KBM-7 (cell line): ENCODE measurements at regions of chr10 and their contacts with region 1.

Region 1: DNA sequence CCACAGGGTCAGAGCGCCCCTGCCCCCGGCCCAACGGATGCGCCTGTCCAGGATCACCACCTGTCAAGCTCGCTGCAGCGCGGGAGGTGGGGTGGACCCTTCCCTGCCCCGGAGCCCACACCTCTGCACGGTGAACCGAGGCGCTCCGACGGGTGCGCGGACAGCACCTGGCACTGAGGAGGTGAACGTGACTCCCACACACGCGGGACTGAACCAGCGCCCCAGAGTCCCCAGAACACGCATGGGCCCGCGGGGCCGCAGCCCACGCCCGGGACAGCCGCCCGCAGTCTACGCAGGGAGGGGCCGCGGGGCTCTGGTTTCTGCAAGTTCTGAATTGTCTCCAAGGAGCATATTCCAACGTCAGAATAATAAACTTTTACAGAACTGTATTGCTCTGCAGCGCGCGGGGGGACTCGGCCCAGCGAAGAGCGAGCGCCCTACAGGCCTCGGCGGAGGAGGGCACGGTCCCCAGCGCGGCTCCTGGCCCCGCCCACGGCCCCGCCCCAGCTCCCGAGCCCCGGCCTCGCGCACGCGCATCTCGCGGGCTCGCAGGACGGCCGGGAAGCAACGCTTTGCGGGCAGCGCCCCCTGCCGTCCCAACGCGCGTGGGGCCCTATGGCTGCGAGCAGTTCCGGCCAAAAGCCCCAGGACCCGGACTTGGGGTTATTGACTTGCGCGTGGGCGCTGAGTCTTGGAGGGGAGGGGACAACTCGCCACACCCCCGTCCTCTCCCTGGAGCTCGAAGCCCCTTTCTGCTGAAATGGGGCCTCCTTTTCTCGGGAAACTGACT is 29.7 kb downstream of the OAT start:
- DNase-seq: peak; percentile 79

Region 2: GRCh38 chr10:123582084-123582989 is 806.7 kb before region 1 on chr10:
- in situ Hi-C with region 1: loop called (anchors 25 kb)
- DNase-seq: peak; percentile 65

Region 3: DNA sequence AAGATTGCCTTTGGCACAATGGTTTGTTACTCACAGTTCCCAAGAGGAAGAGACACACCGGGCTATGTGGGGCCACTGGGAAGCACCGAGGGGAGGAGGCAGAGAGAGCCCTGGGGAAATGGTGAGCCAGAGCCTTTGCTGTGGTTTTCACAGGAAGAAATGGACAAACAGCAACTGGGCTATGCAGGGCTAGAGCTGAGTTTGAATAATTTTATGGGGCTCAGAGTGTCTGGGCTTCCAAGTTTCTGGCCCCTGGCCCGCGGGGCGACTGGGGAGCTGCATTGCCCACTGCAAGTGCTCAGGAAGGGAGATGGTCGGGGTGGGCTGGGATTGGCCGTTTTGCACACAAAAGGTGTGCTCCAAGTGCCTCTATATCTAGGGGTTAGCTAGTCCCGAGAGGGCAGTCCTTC is 388.2 kb before region 1 on chr10:
- in situ Hi-C with region 1: loop called (anchors 10 kb)
- DNase-seq: no peak